Activated B cell treated with CpG ODN at 0.5 μM for 24 hours (primary cell): ENCODE measurements at regions of chr4 and their contacts with region 1.

Region 1: GRCh38 chr4:109815151-109816081 is at the start of gene GAR1:
- DNase-seq: peak; percentile 70
- ATAC-seq: peak; percentile 97
- H3K4me3 Mint-ChIP-seq: peak within 1 kb of the TSS; percentile 94
- H3K27ac Mint-ChIP-seq: peak within 1 kb of the TSS; percentile 93
- H3K4me1 Mint-ChIP-seq: peaks cover 28% of the 10 kb centered on the region
- H3K27me3 Mint-ChIP-seq: no peaks in the 10 kb centered on the region
- CTCF ChIP-seq: no peak
- total RNA-seq, gene GAR1: 21.0 and 23.1 TPM in 2 replicates

Region 2: GRCh38 chr4:109592367-109592766 is 223.0 kb before region 1 on chr4:
- CTCF ChIA-PET with region 1: no interaction called
- POLR2A ChIA-PET with region 1: no interaction called
- intact Hi-C with region 1: no loop called
- DNase-seq: no peak
- ATAC-seq: no peak
- H3K4me3 Mint-ChIP-seq: no peak overlapping the region
- H3K27ac Mint-ChIP-seq: no peak overlapping the region
- H3K4me1 Mint-ChIP-seq: peaks cover 31% of the 10 kb centered on the region
- H3K27me3 Mint-ChIP-seq: no peaks in the 10 kb centered on the region
- CTCF ChIP-seq: no peak

Region 3: GRCh38 chr4:109729718-109730618 is 85.4 kb before region 1 on chr4 and contains the start of gene PLA2G12A:
- CTCF ChIA-PET with region 1: no interaction called
- POLR2A ChIA-PET with region 1: interaction called, 7 read pairs
- intact Hi-C with region 1: loop called (anchors 1 kb)
- DNase-seq: peak; percentile 77
- ATAC-seq: peak; percentile 90
- H3K4me3 Mint-ChIP-seq: peak within 1 kb of the TSS; percentile 90
- H3K27ac Mint-ChIP-seq: peak within 1 kb of the TSS; percentile 79
- H3K4me1 Mint-ChIP-seq: peaks cover 12% of the 10 kb centered on the region
- H3K27me3 Mint-ChIP-seq: no peaks in the 10 kb centered on the region
- CTCF ChIP-seq: no peak
- total RNA-seq, gene PLA2G12A: 6.7 and 9.6 TPM in 2 replicates

Region 4: DNA sequence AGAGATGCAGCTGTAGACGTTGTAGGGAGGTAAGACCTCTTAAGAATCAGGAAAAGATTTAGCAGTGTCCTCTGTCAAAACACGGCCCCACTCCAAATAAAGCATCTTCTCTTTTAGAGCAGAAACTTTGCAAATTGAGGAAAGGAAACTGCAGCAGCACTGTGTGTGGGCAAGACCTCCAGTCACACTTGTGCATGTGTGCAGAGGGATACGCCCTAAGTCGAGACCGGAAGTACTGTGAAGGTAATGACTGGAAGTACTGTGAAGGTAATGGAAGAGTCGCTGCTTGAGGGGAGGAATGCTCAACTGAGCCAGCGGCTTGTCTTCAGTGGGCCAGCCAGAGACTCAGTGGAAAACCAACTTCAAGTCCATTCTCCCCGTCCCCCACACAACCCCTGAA is 143.8 kb after region 1 on chr4:
- CTCF ChIA-PET with region 1: no interaction called
- POLR2A ChIA-PET with region 1: no interaction called
- intact Hi-C with region 1: no loop called
- DNase-seq: no peak
- ATAC-seq: no peak
- H3K4me3 Mint-ChIP-seq: no peak overlapping the region
- H3K27ac Mint-ChIP-seq: no peak overlapping the region
- H3K4me1 Mint-ChIP-seq: no peaks in the 10 kb centered on the region
- H3K27me3 Mint-ChIP-seq: peaks cover 3% of the 10 kb centered on the region
- CTCF ChIP-seq: no peak

Region 5: GRCh38 chr4:109990261-109991257 is 175.1 kb after region 1 on chr4:
- CTCF ChIA-PET with region 1: no interaction called
- POLR2A ChIA-PET with region 1: no interaction called
- intact Hi-C with region 1: loop called (anchors 5 kb)
- DNase-seq: no peak
- ATAC-seq: peak; percentile 80
- H3K4me3 Mint-ChIP-seq: no peak overlapping the region
- H3K27ac Mint-ChIP-seq: peak overlapping the region; percentile 74
- H3K4me1 Mint-ChIP-seq: peaks cover 26% of the 10 kb centered on the region
- H3K27me3 Mint-ChIP-seq: no peaks in the 10 kb centered on the region
- CTCF ChIP-seq: no peak

Region 6: DNA sequence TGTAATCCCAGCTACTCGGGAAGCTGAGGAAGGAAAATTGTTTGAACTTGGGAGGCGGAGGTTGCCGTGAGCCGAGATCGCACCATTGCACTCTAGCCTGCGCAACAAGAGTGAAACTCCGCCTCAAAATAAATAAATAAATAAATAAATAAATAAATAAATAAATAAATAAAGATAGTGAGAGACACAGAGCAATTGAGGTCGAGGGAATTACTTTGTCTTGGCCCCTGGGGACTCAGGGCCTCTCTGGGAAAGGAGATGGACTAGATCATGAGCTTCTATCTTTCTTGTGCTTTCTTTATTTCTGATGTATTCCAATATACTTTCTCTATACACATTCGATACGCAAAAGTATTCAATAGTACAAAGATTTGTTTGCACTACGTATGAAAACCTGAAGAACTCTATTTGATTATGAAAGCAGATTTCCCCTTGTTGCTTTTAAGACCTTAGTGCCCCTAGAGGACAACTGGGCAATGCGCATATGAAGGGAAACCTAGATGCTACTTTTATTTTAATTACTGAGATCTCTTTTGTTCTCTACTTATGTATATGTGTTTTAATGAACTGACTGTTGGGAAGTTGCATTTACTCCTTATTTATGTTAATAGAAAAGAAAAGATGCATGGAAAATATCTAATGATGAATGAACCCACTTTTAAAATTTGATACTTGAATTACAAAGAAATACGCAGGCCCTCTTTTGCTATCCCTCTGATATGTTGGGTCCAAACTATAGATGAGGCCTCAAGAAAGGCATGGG is 395.8 kb after region 1 on chr4:
- CTCF ChIA-PET with region 1: no interaction called
- POLR2A ChIA-PET with region 1: no interaction called
- intact Hi-C with region 1: no loop called
- DNase-seq: no peak
- ATAC-seq: peak; percentile 49
- H3K4me3 Mint-ChIP-seq: no peak overlapping the region
- H3K27ac Mint-ChIP-seq: no peak overlapping the region
- H3K4me1 Mint-ChIP-seq: peaks cover 1% of the 10 kb centered on the region
- H3K27me3 Mint-ChIP-seq: peaks cover under 1% of the 10 kb centered on the region
- CTCF ChIP-seq: no peak